Ascending aorta (tissue), 2 donors: ENCODE measurements at regions of chr12 and their contacts with region 1.

Region 1: GRCh38 chr12:47715393-47715876 is 9.6 kb upstream of the RPAP3 start:
- DNase-seq: peak in 1 of 2 donors; percentile 89
- H3K4me3 ChIP-seq: peak overlapping the region in 1 of 2 donors; percentile 42
- H3K27ac ChIP-seq: peak overlapping the region; percentile 88 to 94
- H3K4me1 ChIP-seq: peaks cover 19 to 26% of the 10 kb centered on the region in 2 donors
- H3K27me3 ChIP-seq: no peaks in the 10 kb centered on the region
- CTCF ChIP-seq: peak; percentile 69 to 90 (median 80)

Region 2: DNA sequence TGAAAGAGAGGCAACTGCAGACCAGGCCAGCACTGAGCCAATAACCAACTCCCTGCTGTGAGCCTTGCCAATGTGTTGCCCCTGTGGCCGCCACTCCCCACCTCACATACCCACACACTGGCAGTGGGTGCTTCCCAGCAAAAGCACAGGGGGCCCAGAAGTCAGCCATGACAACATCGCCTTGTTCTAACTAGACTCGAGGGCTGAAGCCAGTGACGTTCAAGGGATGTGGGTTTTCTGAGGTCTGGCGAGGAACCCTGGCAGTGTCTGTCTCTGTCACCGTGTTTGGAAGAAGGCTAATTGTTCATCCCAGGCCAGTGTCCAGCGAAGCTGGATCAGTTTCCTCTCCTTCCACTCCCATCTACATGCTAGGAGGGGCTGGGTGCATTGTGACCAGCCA is 323.9 kb before region 1 on chr12:
- intact Hi-C with region 1: no loop called
- DNase-seq: no peak
- H3K4me3 ChIP-seq: no peak overlapping the region
- H3K27ac ChIP-seq: no peak overlapping the region
- H3K4me1 ChIP-seq: peaks cover 0 to 10% of the 10 kb centered on the region in 2 donors
- H3K27me3 ChIP-seq: no peaks in the 10 kb centered on the region
- CTCF ChIP-seq: no peak

Region 3: DNA sequence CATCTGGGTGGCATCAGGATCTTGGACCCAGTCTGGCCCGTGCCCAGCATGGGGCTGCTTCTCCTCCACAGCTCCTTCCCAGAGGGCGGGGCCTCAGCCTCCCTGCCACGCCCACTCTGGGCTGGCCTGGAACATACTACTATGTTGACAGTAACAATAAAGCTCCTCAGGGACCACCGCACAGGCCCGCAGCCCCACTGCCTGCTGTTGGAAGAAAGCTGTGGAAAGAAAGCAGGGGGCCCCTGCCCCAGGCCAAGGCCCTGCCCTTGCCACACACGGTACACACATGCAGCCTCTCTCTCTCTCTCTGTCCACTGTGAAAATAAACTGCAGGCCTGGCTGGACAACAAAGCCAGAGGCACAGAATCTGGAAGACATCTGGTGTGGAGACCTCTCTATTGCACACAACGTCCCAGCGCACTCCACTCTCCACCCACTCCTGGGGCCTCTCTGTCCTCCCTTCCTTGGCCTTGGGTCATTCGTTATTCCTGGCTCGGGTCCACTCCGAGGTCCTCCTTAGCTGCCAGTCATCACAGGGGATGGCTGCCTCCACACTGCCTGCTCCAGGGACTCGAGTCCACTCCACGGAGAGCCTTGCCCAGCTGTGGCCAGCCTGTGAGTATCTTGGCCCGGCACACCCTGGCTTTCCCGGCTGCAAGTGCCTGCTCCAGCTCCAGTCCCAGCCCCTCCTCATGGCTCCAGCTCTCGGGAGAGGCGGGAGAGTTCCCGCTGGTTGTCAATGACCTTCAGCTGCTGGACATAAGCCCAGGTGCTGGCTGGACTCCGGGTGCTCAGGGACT is 21.6 kb after region 1 on chr12:
- intact Hi-C with region 1: loop called (anchors 1 kb)
- DNase-seq: peak; percentile 77 to 95
- H3K4me3 ChIP-seq: peak overlapping the region in 1 of 2 donors; percentile 9
- H3K27ac ChIP-seq: peak overlapping the region; percentile 80 to 86
- H3K4me1 ChIP-seq: peaks cover 18 to 45% of the 10 kb centered on the region in 2 donors
- H3K27me3 ChIP-seq: no peaks in the 10 kb centered on the region
- CTCF ChIP-seq: no peak

Region 4: DNA sequence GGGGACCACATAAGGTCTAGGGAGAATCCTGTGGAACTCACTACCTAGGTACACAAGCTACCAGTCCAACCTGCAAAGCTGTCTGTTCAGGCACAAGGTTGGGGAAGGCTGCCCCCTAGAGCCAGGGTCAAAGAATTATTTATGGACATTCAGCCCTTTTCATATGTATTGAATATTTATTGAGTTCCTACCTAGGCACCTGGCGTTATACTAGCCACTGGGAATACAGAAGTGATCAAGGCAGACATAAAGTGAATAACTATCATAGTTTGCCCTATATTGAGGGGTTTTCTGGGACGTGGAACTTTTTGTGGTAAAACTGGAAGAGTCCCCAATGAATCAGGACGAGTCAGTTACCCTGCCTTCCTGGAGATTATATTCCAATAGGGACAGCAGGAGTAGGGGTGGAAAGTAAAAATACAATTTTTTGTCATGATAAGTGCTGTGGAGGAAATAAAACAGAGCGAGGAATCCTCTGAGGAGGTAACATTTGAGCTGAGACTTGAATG is 51.8 kb after region 1 on chr12:
- intact Hi-C with region 1: loop called (anchors 1 kb)
- DNase-seq: no peak
- H3K4me3 ChIP-seq: no peak overlapping the region
- H3K27ac ChIP-seq: no peak overlapping the region
- H3K4me1 ChIP-seq: peaks cover 0 to 8% of the 10 kb centered on the region in 2 donors
- H3K27me3 ChIP-seq: no peaks in the 10 kb centered on the region
- CTCF ChIP-seq: peak; percentile 37 to 56 (median 39)

Region 5: GRCh38 chr12:47779301-47779942 is 64.0 kb after region 1 on chr12:
- intact Hi-C with region 1: loop called (anchors 1 kb)
- DNase-seq: peak; percentile 63 to 96
- H3K4me3 ChIP-seq: no peak overlapping the region
- H3K27ac ChIP-seq: peak overlapping the region; percentile 53 to 88
- H3K4me1 ChIP-seq: peaks cover 37 to 51% of the 10 kb centered on the region in 2 donors
- H3K27me3 ChIP-seq: no peaks in the 10 kb centered on the region
- CTCF ChIP-seq: peak; percentile 87 to 95 (median 92)

Region 6: DNA sequence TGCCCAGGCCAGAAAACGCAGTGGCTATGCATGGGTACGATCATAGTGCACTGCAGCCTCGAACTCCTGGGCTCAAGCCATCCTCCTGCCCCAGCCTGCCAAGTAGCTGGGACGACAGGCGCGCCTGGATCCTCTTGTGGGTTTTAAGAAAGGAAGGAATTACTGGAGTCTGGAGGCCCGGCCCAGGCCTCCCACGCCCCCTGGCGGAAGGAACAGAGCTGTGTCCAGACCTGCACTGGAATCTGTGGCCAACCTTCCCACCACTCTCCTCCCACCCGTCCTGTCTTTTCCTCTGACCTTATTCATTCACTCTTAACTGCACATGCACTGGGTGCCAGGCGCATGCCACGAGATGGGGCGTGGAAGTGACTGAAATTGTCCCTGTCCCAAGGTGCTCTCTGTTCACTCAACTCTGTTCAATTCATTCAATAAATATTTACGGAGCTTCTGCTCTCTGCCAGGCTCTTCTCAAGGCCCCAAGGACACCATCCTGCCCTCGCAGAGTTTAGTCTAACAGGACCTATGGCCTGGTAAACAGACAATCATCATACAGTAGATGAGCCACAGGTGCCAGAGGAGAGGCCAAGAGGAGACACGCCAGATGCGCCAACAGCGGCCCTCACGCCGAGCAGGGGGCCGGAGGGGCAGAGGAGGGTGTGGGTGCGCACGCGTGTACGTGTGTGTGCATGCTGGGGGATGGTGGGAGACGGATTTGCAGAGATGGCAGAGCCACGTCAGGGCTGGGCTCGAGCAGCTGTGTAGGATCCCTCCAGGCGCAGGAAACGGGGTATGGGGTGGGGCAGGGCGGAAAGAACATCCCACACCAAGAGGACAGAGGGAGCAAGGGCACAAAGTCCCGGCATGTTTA is 234.2 kb after region 1 on chr12:
- intact Hi-C with region 1: loop called (anchors 5 kb)
- DNase-seq: peak in 1 of 2 donors; percentile 83
- H3K4me3 ChIP-seq: no peak overlapping the region
- H3K27ac ChIP-seq: no peak overlapping the region
- H3K4me1 ChIP-seq: no peaks in the 10 kb centered on the region
- H3K27me3 ChIP-seq: no peaks in the 10 kb centered on the region
- CTCF ChIP-seq: peak; percentile 69 to 80 (median 71)